RWPE1 (cell line): ENCODE measurements at regions of chr6 and their contacts with region 1.

Region 1: DNA sequence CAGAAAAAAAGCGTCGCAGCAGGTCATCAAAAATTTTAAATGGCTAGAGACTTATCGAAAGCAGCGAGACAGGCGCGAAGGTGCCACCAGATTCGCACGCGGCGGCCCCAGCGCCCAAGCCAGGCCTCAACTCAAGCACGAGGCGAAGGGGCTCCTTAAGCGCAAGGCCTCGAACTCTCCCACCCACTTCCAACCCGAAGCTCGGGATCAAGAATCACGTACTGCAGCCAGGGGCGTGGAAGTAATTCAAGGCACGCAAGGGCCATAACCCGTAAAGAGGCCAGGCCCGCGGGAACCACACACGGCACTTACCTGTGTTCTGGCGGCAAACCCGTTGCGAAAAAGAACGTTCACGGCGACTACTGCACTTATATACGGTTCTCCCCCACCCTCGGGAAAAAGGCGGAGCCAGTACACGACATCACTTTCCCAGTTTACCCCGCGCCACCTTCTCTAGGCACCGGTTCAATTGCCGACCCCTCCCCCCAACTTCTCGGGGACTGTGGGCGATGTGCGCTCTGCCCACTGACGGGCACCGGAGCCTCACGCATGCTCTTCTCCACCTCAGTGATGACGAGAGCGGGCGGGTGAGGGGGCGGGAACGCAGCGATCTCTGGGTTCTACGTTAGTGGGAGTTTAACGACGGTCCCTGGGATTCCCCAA is at the start of gene EEF1A1:
- DNase-seq: peak; percentile 98
- H3K27ac ChIP-seq: peak within 1 kb of the TSS; percentile 98
- CTCF ChIP-seq: no peak

Region 2: GRCh38 chr6:73580247-73581149 is 59.7 kb after region 1 on chr6:
- CTCF ChIA-PET with region 1: no interaction called
- POLR2A ChIA-PET with region 1: interaction called, 11 read pairs
- DNase-seq: peak; percentile 86
- H3K27ac ChIP-seq: peak overlapping the region; percentile 99
- CTCF ChIP-seq: peak; percentile 54

Region 3: GRCh38 chr6:73585566-73586415 is 65.0 kb after region 1 on chr6:
- CTCF ChIA-PET with region 1: no interaction called
- POLR2A ChIA-PET with region 1: interaction called, 10 read pairs
- DNase-seq: peak; percentile 56
- H3K27ac ChIP-seq: peak overlapping the region; percentile 78
- CTCF ChIP-seq: no peak

Region 4: GRCh38 chr6:73610444-73611275 is 89.8 kb after region 1 on chr6:
- CTCF ChIA-PET with region 1: interaction called, 12 read pairs
- POLR2A ChIA-PET with region 1: interaction called, 4 read pairs
- DNase-seq: peak; percentile 59
- H3K27ac ChIP-seq: 0 out of 2 replicates have a peak overlapping the region, but pooled peaks have one; percentile 14
- CTCF ChIP-seq: peak; percentile 77

Region 5: DNA sequence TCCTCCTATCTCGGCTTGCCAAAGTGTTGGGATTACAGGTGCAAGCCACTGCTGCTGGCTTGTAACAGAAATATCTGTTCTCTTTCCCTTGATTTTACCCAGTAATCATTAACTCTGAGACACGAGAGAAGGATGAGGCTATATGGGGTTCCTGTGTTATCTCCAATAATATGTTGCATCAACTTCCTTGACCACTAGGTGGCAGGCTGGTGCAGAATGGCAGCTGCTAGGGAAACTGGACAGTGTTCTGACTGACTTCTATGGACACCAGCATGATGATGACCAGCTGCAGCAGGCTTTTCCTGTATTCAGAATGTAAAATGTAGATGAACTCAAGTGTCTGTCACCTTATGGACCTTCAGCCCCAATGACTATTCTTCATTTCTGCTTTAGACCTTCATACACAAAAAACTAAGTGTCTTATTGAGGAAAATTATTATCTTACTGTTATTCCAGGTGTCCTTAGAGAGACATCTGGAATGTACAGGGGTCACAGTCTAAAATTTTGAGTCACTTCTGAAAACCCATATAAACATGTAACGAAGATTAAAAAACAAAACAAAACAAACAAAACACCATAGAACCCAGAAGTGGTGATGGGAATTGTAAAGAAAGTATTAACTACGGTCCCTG is 154.8 kb after region 1 on chr6:
- CTCF ChIA-PET with region 1: no interaction called
- POLR2A ChIA-PET with region 1: no interaction called
- DNase-seq: peak; percentile 63
- H3K27ac ChIP-seq: no peak overlapping the region
- CTCF ChIP-seq: peak; percentile 89

Region 6: DNA sequence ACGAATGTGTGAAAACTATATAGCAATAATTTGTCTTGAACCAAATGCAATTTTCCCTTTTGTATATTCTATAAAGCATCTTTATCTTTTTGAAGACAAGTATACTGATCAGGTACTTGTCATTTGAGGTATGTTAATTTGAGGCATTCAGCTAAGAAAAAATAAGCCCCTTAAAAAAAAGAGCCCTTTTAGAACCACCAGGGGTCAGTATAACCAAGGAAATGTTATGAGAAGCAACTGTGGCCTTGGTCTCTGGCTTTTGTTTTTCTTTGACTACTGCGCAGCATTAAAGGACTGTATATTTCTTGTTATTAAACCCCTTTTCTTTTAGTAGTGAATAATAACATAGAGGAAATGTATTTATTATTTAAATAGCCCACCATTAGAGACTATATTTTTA is 218.3 kb after region 1 on chr6:
- CTCF ChIA-PET with region 1: no interaction called
- POLR2A ChIA-PET with region 1: no interaction called
- DNase-seq: peak; percentile 26
- H3K27ac ChIP-seq: no peak overlapping the region
- CTCF ChIP-seq: peak; percentile 65

Region 7: DNA sequence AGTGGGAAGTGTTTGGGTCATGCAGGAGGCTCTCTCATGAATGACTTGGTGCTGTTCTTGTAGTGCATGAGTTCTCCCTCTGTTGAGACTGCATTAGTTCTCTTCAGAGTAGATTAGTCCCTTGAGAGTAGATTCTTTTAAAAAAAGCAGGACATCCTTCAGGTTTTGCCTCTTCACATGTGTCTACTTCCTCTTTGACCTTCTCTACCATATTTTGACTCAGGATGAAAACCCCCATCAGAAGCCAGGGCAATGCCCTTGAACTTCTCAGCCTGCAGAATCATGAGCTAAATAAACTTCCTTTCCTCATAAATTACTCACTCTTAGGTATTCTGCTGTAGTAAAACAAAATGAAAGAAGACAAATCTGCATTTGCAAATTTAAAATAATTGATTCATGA is 345.5 kb after region 1 on chr6:
- CTCF ChIA-PET with region 1: no interaction called
- POLR2A ChIA-PET with region 1: no interaction called
- DNase-seq: no peak
- H3K27ac ChIP-seq: no peak overlapping the region
- CTCF ChIP-seq: no peak